Naive thymus-derived CD4-positive, alpha-beta T cell (primary cell): ENCODE measurements at regions of chr22 and their contacts with region 1.

Region 1: GRCh38 chr22:29040385-29041275 is 21.0 kb downstream of the C22orf31 start:
- DNase-seq: peak in 8 of 9 donors; percentile 41 to 73 (median 66)
- ATAC-seq: peak; percentile 87
- H3K4me3 ChIP-seq: no peak overlapping the region
- H3K4me3 Mint-ChIP-seq: no peak overlapping the region
- H3K27ac ChIP-seq: no peak overlapping the region
- H3K27ac Mint-ChIP-seq: no peak overlapping the region
- H3K4me1 ChIP-seq: no peaks in the 10 kb centered on the region
- H3K4me1 Mint-ChIP-seq: no peaks in the 10 kb centered on the region
- H3K27me3 ChIP-seq: no peaks in the 10 kb centered on the region
- H3K27me3 Mint-ChIP-seq: peaks cover 3 to 25% (median 4%) of the 10 kb centered on the region in 5 donors

Region 2: GRCh38 chr22:28019881-28020871 is 1020.5 kb before region 1 on chr22:
- CTCF ChIA-PET with region 1: no interaction called
- POLR2A ChIA-PET with region 1: no interaction called
- intact Hi-C with region 1: loop called in 1 of 2 experiments (anchors 2 kb)
- DNase-seq: peak; percentile 27 to 69 (median 61)
- ATAC-seq: peak; percentile 81
- H3K4me3 ChIP-seq: no peak overlapping the region
- H3K4me3 Mint-ChIP-seq: no peak overlapping the region
- H3K27ac ChIP-seq: no peak overlapping the region
- H3K27ac Mint-ChIP-seq: no peak overlapping the region
- H3K4me1 ChIP-seq: no peaks in the 10 kb centered on the region
- H3K4me1 Mint-ChIP-seq: peaks cover 0 to 8% (median 0%) of the 10 kb centered on the region in 7 donors
- H3K27me3 ChIP-seq: no peaks in the 10 kb centered on the region
- H3K27me3 Mint-ChIP-seq: no peaks in the 10 kb centered on the region

Region 3: GRCh38 chr22:28772633-28773460 is 267.8 kb before region 1 on chr22 and contains the start of gene CCDC117:
- CTCF ChIA-PET with region 1: no interaction called
- POLR2A ChIA-PET with region 1: interaction called, 3 read pairs
- intact Hi-C with region 1: loop called in 1 of 2 experiments (anchors 5 kb)
- DNase-seq: peak; percentile 76 to 93 (median 88)
- ATAC-seq: peak; percentile 97
- H3K4me3 ChIP-seq: peak within 1 kb of the TSS; percentile 83
- H3K4me3 Mint-ChIP-seq: peak within 1 kb of the TSS; percentile 84 to 100 (median 97)
- H3K27ac ChIP-seq: peak within 1 kb of the TSS; percentile 91
- H3K27ac Mint-ChIP-seq: peak within 1 kb of the TSS; percentile 86 to 98 (median 91)
- H3K4me1 ChIP-seq: peaks cover 13 to 17% of the 10 kb centered on the region in 2 donors
- H3K4me1 Mint-ChIP-seq: peaks cover 17 to 46% (median 31%) of the 10 kb centered on the region in 7 donors
- H3K27me3 ChIP-seq: no peaks in the 10 kb centered on the region
- H3K27me3 Mint-ChIP-seq: peaks cover 0 to 2% (median 0%) of the 10 kb centered on the region in 5 donors
- total RNA-seq, gene CCDC117: 13.5 to 33.5 (median 21.2) TPM

Region 4: GRCh38 chr22:28829358-28830181 is 211.1 kb before region 1 on chr22:
- CTCF ChIA-PET with region 1: interaction called, 21 read pairs
- POLR2A ChIA-PET with region 1: no interaction called
- intact Hi-C with region 1: no loop called
- DNase-seq: peak; percentile 50 to 74 (median 69)
- ATAC-seq: peak; percentile 95
- H3K4me3 ChIP-seq: no peak overlapping the region
- H3K4me3 Mint-ChIP-seq: peak overlapping the region; percentile 39 to 75 (median 59)
- H3K27ac ChIP-seq: no peak overlapping the region
- H3K27ac Mint-ChIP-seq: peak overlapping the region in 6 of 9 donors; percentile 33 to 87 (median 66)
- H3K4me1 ChIP-seq: peaks cover 6 to 7% of the 10 kb centered on the region in 2 donors
- H3K4me1 Mint-ChIP-seq: peaks cover 8 to 44% (median 27%) of the 10 kb centered on the region in 7 donors
- H3K27me3 ChIP-seq: no peaks in the 10 kb centered on the region
- H3K27me3 Mint-ChIP-seq: no peaks in the 10 kb centered on the region

Region 5: GRCh38 chr22:29245637-29246385 is 205.2 kb after region 1 on chr22:
- CTCF ChIA-PET with region 1: interaction called, 3 read pairs
- POLR2A ChIA-PET with region 1: no interaction called
- intact Hi-C with region 1: loop called in 1 of 2 experiments (anchors 1 kb)
- DNase-seq: peak; percentile 31 to 68 (median 58)
- ATAC-seq: peak; percentile 95
- H3K4me3 ChIP-seq: no peak overlapping the region
- H3K4me3 Mint-ChIP-seq: no peak overlapping the region
- H3K27ac ChIP-seq: no peak overlapping the region
- H3K27ac Mint-ChIP-seq: peak overlapping the region in 1 of 9 donors; percentile 58
- H3K4me1 ChIP-seq: no peaks in the 10 kb centered on the region
- H3K4me1 Mint-ChIP-seq: peaks cover 0 to 4% (median 0%) of the 10 kb centered on the region in 7 donors
- H3K27me3 ChIP-seq: no peaks in the 10 kb centered on the region
- H3K27me3 Mint-ChIP-seq: peaks cover 5 to 23% (median 10%) of the 10 kb centered on the region in 5 donors